CD4-positive, alpha-beta memory T cell (primary cell): ENCODE measurements at regions of chr14 and their contacts with region 1.

Region 1: DNA sequence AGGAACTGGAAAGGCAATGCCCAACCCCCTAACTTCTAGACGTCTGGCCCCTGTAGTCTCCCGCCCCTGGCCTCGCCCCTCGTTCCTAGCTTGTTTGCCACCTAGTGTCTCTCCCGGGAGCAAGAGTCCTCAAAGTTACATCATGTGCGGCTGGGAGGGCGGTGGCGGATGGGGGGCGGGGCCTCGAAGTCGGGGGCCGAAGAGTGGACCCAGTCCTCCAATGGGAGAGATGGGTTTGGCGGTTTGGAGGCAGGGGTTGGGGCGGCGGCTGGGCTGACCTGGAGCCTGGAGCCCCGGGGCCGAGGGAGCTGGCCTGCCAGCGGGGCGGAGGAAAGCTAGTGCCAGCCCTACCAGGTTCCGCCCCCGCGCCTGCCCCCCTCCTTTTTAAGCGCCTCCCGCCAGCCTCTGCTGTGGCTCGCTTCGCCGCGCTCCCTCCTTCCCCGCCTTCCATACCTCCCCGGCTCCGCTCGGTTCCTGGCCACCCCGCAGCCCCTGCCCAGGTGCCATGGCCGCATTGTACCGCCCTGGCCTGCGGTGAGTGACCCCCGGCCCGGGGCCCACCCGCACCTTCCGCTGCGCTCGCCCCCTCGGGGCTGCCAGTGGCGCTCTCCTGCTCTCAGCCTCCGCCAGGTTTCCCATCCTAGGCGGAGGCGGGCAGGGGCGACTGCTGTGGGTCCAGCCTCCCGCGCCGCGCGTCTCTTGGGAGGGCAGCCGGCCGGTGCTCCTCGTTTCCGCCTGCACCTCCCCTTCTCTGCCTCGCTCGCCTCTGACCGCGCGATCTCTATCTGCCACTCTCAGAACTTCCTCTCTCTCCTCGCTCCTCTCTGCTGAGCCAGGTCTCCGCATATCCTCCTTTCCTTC is at the start of gene PCK2:
- DNase-seq: peak; percentile 53 to 75 (median 61)
- H3K4me3 ChIP-seq: peak within 1 kb of the TSS; percentile 82 to 90
- H3K4me3 Mint-ChIP-seq: peak within 1 kb of the TSS; percentile 91 to 100 (median 98)
- H3K27ac ChIP-seq: peak within 1 kb of the TSS; percentile 84
- H3K27ac Mint-ChIP-seq: peak within 1 kb of the TSS; percentile 84 to 98 (median 97)
- H3K4me1 ChIP-seq: peaks cover 26% of the 10 kb centered on the region
- H3K4me1 Mint-ChIP-seq: peaks cover 21 to 47% (median 33%) of the 10 kb centered on the region in 4 donors
- H3K27me3 ChIP-seq: no peaks in the 10 kb centered on the region
- H3K27me3 Mint-ChIP-seq: no peaks in the 10 kb centered on the region
- total RNA-seq, gene PCK2: 18.3 to 21.4 TPM

Region 2: DNA sequence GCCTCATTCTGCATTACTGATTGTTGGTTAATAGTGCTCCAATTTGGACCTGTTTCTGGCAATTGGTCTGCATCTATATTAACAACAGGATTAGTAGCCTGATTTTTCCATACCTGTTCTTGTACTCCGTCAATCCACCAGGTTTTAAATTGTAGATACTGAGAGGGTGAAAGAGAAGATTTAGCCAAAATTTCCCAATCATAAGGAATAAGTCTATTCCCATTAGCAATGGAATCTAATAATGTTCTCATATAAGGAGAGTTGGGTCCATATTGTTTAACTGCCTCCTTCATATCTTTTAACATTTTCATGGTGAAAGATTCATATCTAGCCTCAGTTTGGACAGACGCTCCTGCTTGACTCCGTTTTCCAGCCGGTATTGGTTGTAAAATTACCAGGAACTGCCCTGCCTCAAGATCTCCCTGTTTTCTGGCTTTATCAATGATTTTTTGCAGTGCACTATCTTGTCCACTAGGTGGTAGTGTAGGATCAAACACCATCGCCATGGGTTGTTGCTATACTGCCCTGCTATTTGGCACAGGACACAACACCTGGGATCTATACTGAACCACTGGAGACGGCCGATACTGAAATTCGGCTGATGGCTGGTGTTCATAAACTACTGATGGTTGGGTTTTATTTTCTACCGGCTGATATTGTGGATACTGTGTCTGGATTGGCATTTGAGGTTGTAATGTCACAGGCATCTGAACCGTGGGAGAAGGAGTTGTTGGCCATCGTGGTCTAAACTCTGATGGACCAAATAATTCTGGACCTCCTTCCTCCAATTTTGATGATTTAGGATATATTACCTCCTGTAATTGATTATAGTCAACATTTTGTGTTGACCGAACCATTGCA is 80.2 kb before region 1 on chr14:
- CTCF ChIA-PET with region 1: interaction called, 9 read pairs
- POLR2A ChIA-PET with region 1: no interaction called
- intact Hi-C with region 1: loop called (anchors 1 kb)
- DNase-seq: peak; percentile 60 to 77 (median 70)
- H3K4me3 ChIP-seq: no peak overlapping the region
- H3K4me3 Mint-ChIP-seq: no peak overlapping the region
- H3K27ac ChIP-seq: no peak overlapping the region
- H3K27ac Mint-ChIP-seq: no peak overlapping the region
- H3K4me1 ChIP-seq: peaks cover 19% of the 10 kb centered on the region
- H3K4me1 Mint-ChIP-seq: peaks cover 19 to 27% (median 23%) of the 10 kb centered on the region in 4 donors
- H3K27me3 ChIP-seq: no peaks in the 10 kb centered on the region
- H3K27me3 Mint-ChIP-seq: peaks cover 0 to 3% of the 10 kb centered on the region in 2 donors

Region 3: DNA sequence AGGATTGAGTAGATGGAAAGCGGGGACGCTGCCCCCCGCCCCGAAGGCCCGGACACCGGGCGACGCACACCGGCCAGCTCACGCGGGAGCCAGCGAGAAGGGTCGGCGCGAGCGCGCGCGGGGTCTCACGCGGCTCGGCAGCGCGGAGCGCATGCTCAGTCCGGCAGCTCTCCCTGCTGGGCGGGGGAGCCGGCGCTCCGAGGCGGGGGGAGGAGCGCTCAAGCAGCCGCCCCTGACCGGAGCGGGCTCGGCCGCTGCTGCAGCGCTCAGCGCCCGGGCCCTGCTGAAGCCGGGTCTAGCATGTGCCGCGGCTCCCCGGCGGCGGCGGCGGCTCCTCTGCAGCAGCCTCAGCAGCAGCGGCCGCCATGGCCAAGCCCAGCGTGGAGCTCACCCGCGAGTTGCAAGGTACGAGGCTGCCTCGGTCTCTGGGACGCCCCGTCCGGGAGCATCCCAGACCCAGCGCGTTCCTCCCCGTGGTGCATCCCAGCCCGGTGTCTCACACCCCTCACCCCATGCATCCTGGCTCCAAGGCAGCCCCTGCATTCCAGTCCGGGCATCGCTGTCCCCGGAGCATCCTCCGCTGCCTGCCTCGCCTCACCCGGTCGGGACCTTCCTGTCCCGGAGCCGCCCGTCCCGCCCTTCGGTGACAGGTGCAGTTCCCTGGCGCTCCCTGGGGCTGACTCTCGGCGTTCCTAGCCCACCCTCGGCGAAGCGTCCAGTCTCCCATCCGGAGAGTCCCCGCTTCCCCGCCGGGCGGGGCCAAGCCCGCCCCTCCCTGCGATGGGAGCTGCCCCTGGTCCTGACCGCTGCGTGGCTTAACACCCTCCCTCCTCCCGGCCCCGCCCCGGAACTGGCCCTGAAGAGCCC is 42.1 kb before region 1 on chr14 and contains the start of gene CARMIL3:
- CTCF ChIA-PET with region 1: interaction called, 475 read pairs
- POLR2A ChIA-PET with region 1: interaction called, 29 read pairs
- intact Hi-C with region 1: no loop called
- DNase-seq: peak; percentile 50 to 58 (median 53)
- H3K4me3 ChIP-seq: peak within 1 kb of the TSS in 1 of 2 donors; percentile 76
- H3K4me3 Mint-ChIP-seq: peak within 1 kb of the TSS; percentile 83 to 92 (median 88)
- H3K27ac ChIP-seq: peak within 1 kb of the TSS; percentile 16
- H3K27ac Mint-ChIP-seq: peak within 1 kb of the TSS in 5 of 7 donors; percentile 14 to 81 (median 68)
- H3K4me1 ChIP-seq: peaks cover 14% of the 10 kb centered on the region
- H3K4me1 Mint-ChIP-seq: peaks cover 10 to 17% (median 14%) of the 10 kb centered on the region in 4 donors
- H3K27me3 ChIP-seq: no peaks in the 10 kb centered on the region
- H3K27me3 Mint-ChIP-seq: peaks cover 6 to 8% of the 10 kb centered on the region in 2 donors
- total RNA-seq, gene CARMIL3: 0.15 to 0.22 TPM

Region 4: DNA sequence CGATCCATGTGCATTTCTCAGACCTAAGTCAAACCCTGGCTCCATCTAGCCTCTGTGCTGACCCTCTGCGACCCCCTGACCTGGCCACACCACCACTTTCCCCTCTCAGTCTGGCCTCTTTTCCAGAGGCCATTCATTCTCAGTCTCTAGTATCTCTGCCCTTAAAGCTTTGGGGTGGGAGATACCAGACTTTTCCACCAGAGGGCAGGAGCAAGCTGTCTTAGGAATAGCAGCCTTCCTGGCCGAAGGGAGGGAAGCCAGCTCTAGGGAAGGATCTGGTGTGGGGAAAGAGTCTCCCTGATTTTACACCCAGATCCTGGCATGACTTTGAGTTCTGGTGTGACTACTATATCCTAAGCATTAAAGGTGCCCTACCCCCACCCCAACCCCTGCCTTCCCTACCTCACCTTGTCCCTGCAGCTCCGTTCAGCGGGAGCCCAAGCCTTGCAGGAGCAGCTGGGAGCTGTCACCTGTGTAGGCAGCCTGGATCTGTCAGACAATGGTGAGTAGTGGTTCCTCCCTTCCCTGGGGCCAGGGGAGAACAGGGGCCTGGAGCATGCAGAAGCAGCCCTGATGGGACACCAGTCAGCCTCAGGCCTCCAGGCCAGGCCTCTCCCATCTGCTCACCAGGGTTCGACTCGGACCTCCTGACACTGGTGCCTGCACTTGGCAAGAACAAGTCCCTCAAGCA is 35.7 kb before region 1 on chr14:
- CTCF ChIA-PET with region 1: interaction called, 475 read pairs
- POLR2A ChIA-PET with region 1: interaction called, 31 read pairs
- intact Hi-C with region 1: loop called (anchors 1 kb)
- DNase-seq: peak; percentile 49 to 63 (median 61)
- H3K4me3 ChIP-seq: no peak overlapping the region
- H3K4me3 Mint-ChIP-seq: peak overlapping the region in 1 of 8 donors; percentile 59
- H3K27ac ChIP-seq: no peak overlapping the region
- H3K27ac Mint-ChIP-seq: peak overlapping the region in 6 of 7 donors; percentile 10 to 81 (median 36)
- H3K4me1 ChIP-seq: no peaks in the 10 kb centered on the region
- H3K4me1 Mint-ChIP-seq: peaks cover 2 to 8% (median 3%) of the 10 kb centered on the region in 4 donors
- H3K27me3 ChIP-seq: no peaks in the 10 kb centered on the region
- H3K27me3 Mint-ChIP-seq: peaks cover 2% of the 10 kb centered on the region in 2 donors

Region 5: DNA sequence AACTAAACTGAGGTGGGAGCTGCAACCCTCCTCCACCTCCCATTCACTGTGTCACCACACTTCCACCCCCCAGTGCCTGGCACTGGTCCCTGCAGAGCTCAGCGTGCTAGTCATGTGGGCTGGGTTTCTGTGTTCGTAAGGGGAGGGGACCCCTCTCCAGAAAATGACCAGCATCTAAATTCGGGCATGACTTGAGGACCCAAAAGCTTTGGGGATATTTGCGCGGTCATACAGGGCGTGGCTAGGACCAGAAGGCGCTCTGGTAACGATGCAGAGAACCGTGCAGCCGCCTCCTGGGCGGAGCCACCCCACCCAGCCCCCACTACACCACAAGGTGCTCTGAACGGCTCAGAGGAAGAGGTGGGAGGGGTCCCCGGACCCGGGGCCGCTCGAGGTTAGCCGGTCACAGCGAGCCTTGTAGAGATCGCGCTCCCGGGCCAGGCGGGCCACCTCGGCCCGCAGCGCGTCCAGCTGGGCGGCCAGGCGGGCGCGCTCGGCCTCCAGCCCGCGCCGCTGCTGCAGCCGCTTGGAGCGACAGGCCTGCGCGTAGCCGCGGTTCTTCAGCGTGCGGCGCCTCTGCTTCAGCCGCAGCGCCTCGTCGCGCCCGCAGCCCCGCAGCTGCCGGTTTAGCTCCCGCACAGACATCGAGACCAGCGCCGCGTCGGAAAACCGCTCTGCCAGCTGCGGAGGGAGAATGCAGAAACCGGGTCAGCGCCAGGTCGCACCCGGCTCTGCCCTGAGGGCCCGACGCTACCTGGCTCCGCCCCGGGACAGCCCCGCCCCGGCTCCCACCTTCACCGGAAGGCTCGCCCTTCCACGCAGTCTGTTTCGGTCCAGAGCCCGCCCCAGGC is 13.0 kb before region 1 on chr14:
- CTCF ChIA-PET with region 1: interaction called, 168 read pairs
- POLR2A ChIA-PET with region 1: interaction called, 81 read pairs
- intact Hi-C with region 1: loop called (anchors 1 kb)
- DNase-seq: peak; percentile 64 to 77 (median 67)
- H3K4me3 ChIP-seq: peak overlapping the region; percentile 39 to 60
- H3K4me3 Mint-ChIP-seq: peak overlapping the region; percentile 81 to 90 (median 87)
- H3K27ac ChIP-seq: peak overlapping the region; percentile 50
- H3K27ac Mint-ChIP-seq: peak overlapping the region; percentile 64 to 92 (median 88)
- H3K4me1 ChIP-seq: peaks cover 14% of the 10 kb centered on the region
- H3K4me1 Mint-ChIP-seq: peaks cover 10 to 27% (median 15%) of the 10 kb centered on the region in 4 donors
- H3K27me3 ChIP-seq: no peaks in the 10 kb centered on the region
- H3K27me3 Mint-ChIP-seq: no peaks in the 10 kb centered on the region

Region 6: GRCh38 chr14:24135834-24136542 is 41.9 kb after region 1 on chr14 and contains the start of gene PSME1:
- CTCF ChIA-PET with region 1: interaction called, 4 read pairs
- POLR2A ChIA-PET with region 1: interaction called, 20 read pairs
- intact Hi-C with region 1: loop called (anchors 10 kb)
- DNase-seq: peak; percentile 92 to 94 (median 93)
- H3K4me3 ChIP-seq: peak within 1 kb of the TSS; percentile 30 to 87
- H3K4me3 Mint-ChIP-seq: peak within 1 kb of the TSS; percentile 87 to 94 (median 92)
- H3K27ac ChIP-seq: peak within 1 kb of the TSS; percentile 84
- H3K27ac Mint-ChIP-seq: peak within 1 kb of the TSS; percentile 88 to 96 (median 94)
- H3K4me1 ChIP-seq: peaks cover 59% of the 10 kb centered on the region
- H3K4me1 Mint-ChIP-seq: peaks cover 35 to 70% (median 55%) of the 10 kb centered on the region in 4 donors
- H3K27me3 ChIP-seq: no peaks in the 10 kb centered on the region
- H3K27me3 Mint-ChIP-seq: no peaks in the 10 kb centered on the region
- total RNA-seq, gene PSME1: 257 to 273 TPM

Region 7: GRCh38 chr14:24141097-24141880 is 47.2 kb after region 1 on chr14 and contains the start of gene EMC9:
- CTCF ChIA-PET with region 1: interaction called, 4 read pairs
- POLR2A ChIA-PET with region 1: interaction called, 20 read pairs
- intact Hi-C with region 1: loop called (anchors 10 kb)
- DNase-seq: peak; percentile 98 to 100 (median 99)
- H3K4me3 ChIP-seq: peak within 1 kb of the TSS; percentile 83 to 91
- H3K4me3 Mint-ChIP-seq: peak within 1 kb of the TSS; percentile 85 to 97 (median 94)
- H3K27ac ChIP-seq: peak within 1 kb of the TSS; percentile 77
- H3K27ac Mint-ChIP-seq: peak within 1 kb of the TSS; percentile 76 to 95 (median 94)
- H3K4me1 ChIP-seq: peaks cover 74% of the 10 kb centered on the region
- H3K4me1 Mint-ChIP-seq: peaks cover 38 to 94% (median 61%) of the 10 kb centered on the region in 4 donors
- H3K27me3 ChIP-seq: no peaks in the 10 kb centered on the region
- H3K27me3 Mint-ChIP-seq: no peaks in the 10 kb centered on the region
- total RNA-seq, gene EMC9: 33.0 to 33.9 TPM